ENCODE measurements at regions of chr20 and their contacts with region 1.

Region 1: GRCh38 chr20:34089655-34090345 is 22.2 kb downstream of the EIF2S2 start:
- DNase-seq: no peak
- H3K4me3 ChIP-seq: no peak overlapping the region
- H3K27ac ChIP-seq: no peak overlapping the region
- H3K4me1 ChIP-seq: no peaks in the 10 kb centered on the region
- H3K27me3 ChIP-seq: no peaks in the 10 kb centered on the region
- CTCF ChIP-seq: no peak

Region 2: GRCh38 chr20:34129518-34130162 is 39.8 kb after region 1 on chr20:
- CTCF ChIA-PET with region 1: no interaction called
- POLR2A ChIA-PET with region 1: no interaction called
- intact Hi-C with region 1: no loop called
- DNase-seq: peak; percentile 55 to 60
- H3K4me3 ChIP-seq: no peak overlapping the region
- H3K27ac ChIP-seq: no peak overlapping the region
- H3K4me1 ChIP-seq: peaks cover 4% of the 10 kb centered on the region
- H3K27me3 ChIP-seq: no peaks in the 10 kb centered on the region
- CTCF ChIP-seq: peak; percentile 91

Region 3: DNA sequence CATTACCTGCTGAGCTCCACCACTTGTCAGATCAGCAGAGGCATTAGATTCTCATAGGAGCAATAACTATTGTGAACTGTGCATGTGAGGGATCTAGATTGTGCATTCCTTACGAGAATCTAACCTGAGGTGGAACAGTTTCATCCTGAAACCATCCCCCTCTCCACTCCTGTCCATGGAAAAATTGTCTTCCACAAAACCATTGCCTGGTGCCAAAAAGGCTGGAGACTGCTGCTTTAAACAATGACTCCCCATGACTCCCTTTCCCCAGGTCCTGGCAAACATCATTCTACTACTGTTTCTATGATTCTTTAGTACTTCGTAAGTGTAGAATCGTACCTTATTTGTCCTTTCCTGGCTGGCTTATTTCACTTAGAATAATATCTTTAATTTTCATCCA is 416.7 kb after region 1 on chr20:
- CTCF ChIA-PET with region 1: interaction called, 15 read pairs
- POLR2A ChIA-PET with region 1: no interaction called
- intact Hi-C with region 1: no loop called
- DNase-seq: no peak
- H3K4me3 ChIP-seq: no peak overlapping the region
- H3K27ac ChIP-seq: no peak overlapping the region
- H3K4me1 ChIP-seq: no peaks in the 10 kb centered on the region
- H3K27me3 ChIP-seq: no peaks in the 10 kb centered on the region
- CTCF ChIP-seq: no peak

Region 4: DNA sequence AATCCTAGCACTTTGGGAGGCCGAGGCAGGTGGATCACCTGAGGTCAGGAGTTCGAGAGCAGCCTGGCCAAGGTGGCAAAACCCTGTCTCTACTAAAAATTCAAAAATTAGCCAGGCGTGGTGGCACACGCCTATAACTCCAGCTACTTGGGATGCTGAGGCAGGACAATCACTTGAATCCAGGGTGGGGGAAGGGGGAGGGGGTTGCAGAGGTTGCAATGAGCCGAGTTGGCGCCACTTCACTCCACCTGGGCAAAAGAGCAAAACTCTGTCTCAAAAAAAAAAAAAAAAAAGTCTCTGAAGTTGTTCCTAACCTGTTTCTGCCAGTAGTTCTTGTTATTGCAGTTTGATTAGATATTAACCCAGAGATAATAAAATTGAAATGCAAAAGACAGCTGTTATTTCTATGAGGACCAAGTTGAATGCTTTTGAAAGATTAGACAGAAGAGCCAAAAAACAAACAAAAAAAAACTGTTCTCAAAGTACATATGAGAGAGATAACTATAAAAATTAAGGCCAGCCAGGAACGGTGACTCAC is 564.5 kb after region 1 on chr20:
- CTCF ChIA-PET with region 1: interaction called, 15 read pairs
- POLR2A ChIA-PET with region 1: no interaction called
- intact Hi-C with region 1: no loop called
- DNase-seq: no peak
- H3K4me3 ChIP-seq: no peak overlapping the region
- H3K27ac ChIP-seq: no peak overlapping the region
- H3K4me1 ChIP-seq: no peaks in the 10 kb centered on the region
- H3K27me3 ChIP-seq: no peaks in the 10 kb centered on the region
- CTCF ChIP-seq: no peak